Esophagus squamous epithelium (tissue), 5 donors: ENCODE measurements at regions of chr15 and their contacts with region 1.

Region 1: GRCh38 chr15:47196057-47196456 is 521.2 kb upstream of the SEMA6D start:
- DNase-seq: no peak
- H3K4me3 ChIP-seq: no peak overlapping the region
- H3K27ac ChIP-seq: no peak overlapping the region
- H3K4me1 ChIP-seq: peaks cover 0 to 5% (median 0%) of the 10 kb centered on the region in 3 donors
- H3K27me3 ChIP-seq: peaks cover 0 to 7% (median 0%) of the 10 kb centered on the region in 4 donors
- CTCF ChIP-seq: peak in 5 of 6 experiments; percentile 64 to 78 (median 74)
- POLR2A ChIP-seq: no peak

Region 2: GRCh38 chr15:47027322-47027946 is 168.6 kb before region 1 on chr15:
- intact Hi-C with region 1: no loop called
- DNase-seq: no peak
- H3K4me3 ChIP-seq: no peak overlapping the region
- H3K27ac ChIP-seq: no peak overlapping the region
- H3K4me1 ChIP-seq: no peaks in the 10 kb centered on the region
- H3K27me3 ChIP-seq: no peaks in the 10 kb centered on the region
- CTCF ChIP-seq: no peak
- POLR2A ChIP-seq: no peak

Region 3: DNA sequence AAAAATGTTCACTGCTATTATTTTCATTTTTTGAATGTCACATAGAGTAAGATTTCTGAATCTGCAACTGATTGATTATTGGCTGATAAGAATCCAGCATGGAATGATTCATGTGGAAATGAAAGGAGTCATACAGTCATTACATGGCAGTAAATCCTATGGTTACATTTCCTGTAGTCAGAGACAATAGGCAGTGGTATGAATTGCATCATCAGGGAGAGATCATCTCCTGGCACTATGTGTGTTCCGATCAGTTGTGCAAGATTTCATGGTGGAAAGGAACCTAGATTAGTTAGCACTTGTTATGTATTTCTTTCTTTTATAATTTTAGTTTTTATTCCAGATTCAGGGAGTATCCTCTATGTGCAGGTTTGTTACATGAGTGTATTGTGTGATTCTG is 1048.9 kb after region 1 on chr15:
- intact Hi-C with region 1: loop called (anchors 5 kb)
- DNase-seq: no peak
- H3K4me3 ChIP-seq: no peak overlapping the region
- H3K27ac ChIP-seq: no peak overlapping the region
- H3K4me1 ChIP-seq: no peaks in the 10 kb centered on the region
- H3K27me3 ChIP-seq: peaks cover 0 to 15% (median 0%) of the 10 kb centered on the region in 4 donors
- CTCF ChIP-seq: no peak
- POLR2A ChIP-seq: no peak

Region 4: GRCh38 chr15:48285329-48286214 is 1089.5 kb after region 1 on chr15:
- intact Hi-C with region 1: loop called (anchors 10 kb)
- DNase-seq: no peak
- H3K4me3 ChIP-seq: peak overlapping the region in 2 of 4 donors; percentile 8 to 50
- H3K27ac ChIP-seq: peak overlapping the region in 1 of 4 donors; percentile 4
- H3K4me1 ChIP-seq: peaks cover 0 to 8% (median 4%) of the 10 kb centered on the region in 3 donors
- H3K27me3 ChIP-seq: peaks cover 0 to 7% (median 0%) of the 10 kb centered on the region in 4 donors
- CTCF ChIP-seq: peak; percentile 58 to 70 (median 64)
- POLR2A ChIP-seq: no peak